ENCODE measurements at regions of chr3 and their contacts with region 1.

Region 1: DNA sequence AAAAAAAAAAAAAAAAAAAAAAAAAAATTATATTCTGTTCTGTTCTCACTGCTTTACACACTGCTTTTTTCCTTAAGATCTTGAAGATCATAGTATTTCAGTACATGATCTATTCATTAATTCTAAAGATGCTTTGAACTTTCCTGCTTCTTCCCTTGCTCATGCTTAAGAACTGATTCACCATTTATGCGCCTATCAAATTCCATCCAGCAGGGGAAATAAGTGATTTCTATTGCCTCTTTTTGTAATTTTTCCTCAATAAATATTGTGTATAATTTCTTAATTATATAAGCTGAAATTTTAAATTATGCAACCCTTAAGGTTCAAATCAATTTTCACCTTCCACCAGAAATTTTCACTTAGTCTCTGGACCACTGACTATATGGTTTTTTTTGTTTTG is 10.6 kb downstream of the DENND6A start:
- DNase-seq: no peak
- ATAC-seq: no peak
- H3K4me3 Mint-ChIP-seq: no peak overlapping the region
- H3K27ac Mint-ChIP-seq: no peak overlapping the region
- H3K4me1 Mint-ChIP-seq: peaks cover 21% of the 10 kb centered on the region
- H3K27me3 Mint-ChIP-seq: no peaks in the 10 kb centered on the region
- CTCF ChIP-seq: no peak

Region 2: DNA sequence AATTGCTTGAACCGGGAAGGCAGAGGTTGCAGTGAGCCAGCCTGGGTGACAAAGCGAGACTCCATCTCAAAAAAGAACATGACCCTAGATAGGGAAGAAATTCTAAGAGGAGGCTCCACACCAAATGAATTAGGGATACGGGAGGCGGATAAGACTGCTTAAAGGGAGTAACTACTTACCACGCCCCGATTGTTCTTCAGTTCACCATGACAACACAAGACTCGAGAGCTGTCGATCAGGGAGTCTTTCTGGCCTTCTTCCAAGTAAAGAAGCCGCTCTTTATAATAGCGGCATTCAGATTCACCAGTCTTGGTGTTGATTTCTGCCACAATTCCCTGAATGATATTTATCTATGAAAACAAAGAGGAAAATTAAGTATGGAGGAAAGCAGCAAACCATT is 945.3 kb before region 1 on chr3:
- CTCF ChIA-PET with region 1: no interaction called
- POLR2A ChIA-PET with region 1: interaction called, 10 read pairs
- intact Hi-C with region 1: no loop called
- DNase-seq: no peak
- ATAC-seq: no peak
- H3K4me3 Mint-ChIP-seq: no peak overlapping the region
- H3K27ac Mint-ChIP-seq: no peak overlapping the region
- H3K4me1 Mint-ChIP-seq: no peaks in the 10 kb centered on the region
- H3K27me3 Mint-ChIP-seq: no peaks in the 10 kb centered on the region
- CTCF ChIP-seq: no peak

Region 3: GRCh38 chr3:57110798-57111197 is 571.5 kb before region 1 on chr3:
- CTCF ChIA-PET with region 1: no interaction called
- POLR2A ChIA-PET with region 1: no interaction called
- intact Hi-C with region 1: no loop called
- DNase-seq: no peak
- ATAC-seq: no peak
- H3K4me3 Mint-ChIP-seq: no peak overlapping the region
- H3K27ac Mint-ChIP-seq: no peak overlapping the region
- H3K4me1 Mint-ChIP-seq: no peaks in the 10 kb centered on the region
- H3K27me3 Mint-ChIP-seq: peaks cover 10% of the 10 kb centered on the region
- CTCF ChIP-seq: no peak

Region 4: DNA sequence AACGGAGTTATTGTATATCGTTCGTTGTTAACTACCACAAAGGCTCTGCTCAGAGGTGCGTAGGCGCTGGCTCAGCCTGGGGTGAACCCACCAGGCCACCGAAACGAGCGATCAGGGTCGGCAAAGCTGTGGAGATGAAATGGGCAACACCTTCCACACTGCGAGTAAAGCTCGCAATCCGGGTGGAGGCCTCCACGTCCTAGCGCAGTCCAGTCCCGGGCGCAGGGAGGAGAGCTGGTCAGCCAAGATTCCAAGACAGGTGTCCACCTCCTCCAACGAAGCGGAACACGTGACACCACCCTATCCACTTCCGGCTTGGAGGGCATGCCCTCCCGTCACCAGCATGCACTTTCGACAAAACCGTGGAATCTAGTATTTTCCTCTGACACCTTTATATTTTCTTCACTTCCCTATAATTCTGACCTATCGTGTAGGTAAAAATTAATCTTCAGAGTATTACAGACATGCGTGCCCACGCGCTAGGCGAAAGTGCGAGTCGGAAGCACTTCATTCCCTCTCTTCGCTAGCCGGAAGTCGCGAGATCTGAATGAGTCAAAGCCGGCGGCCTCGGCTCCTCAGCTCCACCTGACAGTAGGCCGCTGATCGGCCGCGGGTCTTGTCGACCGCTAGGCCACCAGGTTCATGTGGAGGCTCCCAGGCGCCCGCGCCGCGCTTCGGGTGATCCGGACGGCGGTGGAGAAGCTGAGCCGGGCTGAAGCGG is 126.4 kb before region 1 on chr3 and contains the start of gene PDE12:
- CTCF ChIA-PET with region 1: no interaction called
- POLR2A ChIA-PET with region 1: no interaction called
- intact Hi-C with region 1: no loop called
- DNase-seq: peak; percentile 77
- ATAC-seq: peak; percentile 79
- H3K4me3 Mint-ChIP-seq: peak within 1 kb of the TSS; percentile 87
- H3K27ac Mint-ChIP-seq: peak within 1 kb of the TSS; percentile 99
- H3K4me1 Mint-ChIP-seq: peaks cover 41% of the 10 kb centered on the region
- H3K27me3 Mint-ChIP-seq: no peaks in the 10 kb centered on the region
- CTCF ChIP-seq: no peak
- total RNA-seq, gene PDE12: 23.7 and 24.8 TPM in 2 replicates

Measured in activated B cell treated with CpG ODN at 0.5 μM for 24 hours (primary cell).